ENCODE measurements at regions of chr6 and their contacts with region 1.

Region 1: GRCh38 chr6:108848116-108848868 is at the start of gene ARMC2:
- DNase-seq: peak; percentile 89
- ATAC-seq: peak; percentile 86
- H3K4me3 Mint-ChIP-seq: peak within 1 kb of the TSS; percentile 84
- H3K27ac Mint-ChIP-seq: peak within 1 kb of the TSS; percentile 83
- H3K4me1 Mint-ChIP-seq: peaks cover 31% of the 10 kb centered on the region
- H3K27me3 Mint-ChIP-seq: peaks cover 5% of the 10 kb centered on the region
- total RNA-seq, gene ARMC2: 10.3 to 10.9 TPM

Region 2: GRCh38 chr6:108835218-108835850 is 13.0 kb before region 1 on chr6:
- CTCF ChIA-PET with region 1: interaction called, 49 read pairs
- POLR2A ChIA-PET with region 1: no interaction called
- DNase-seq: peak; percentile 91
- ATAC-seq: peak; percentile 96
- H3K4me3 Mint-ChIP-seq: no peak overlapping the region
- H3K27ac Mint-ChIP-seq: no peak overlapping the region
- H3K4me1 Mint-ChIP-seq: peaks cover 45% of the 10 kb centered on the region
- H3K27me3 Mint-ChIP-seq: peaks cover 14% of the 10 kb centered on the region

Region 3: GRCh38 chr6:108862479-108863191 is 14.3 kb after region 1 on chr6:
- CTCF ChIA-PET with region 1: interaction called, 11 read pairs
- POLR2A ChIA-PET with region 1: no interaction called
- DNase-seq: no peak
- ATAC-seq: no peak
- H3K4me3 Mint-ChIP-seq: no peak overlapping the region
- H3K27ac Mint-ChIP-seq: peak overlapping the region; percentile 53
- H3K4me1 Mint-ChIP-seq: peaks cover 36% of the 10 kb centered on the region
- H3K27me3 Mint-ChIP-seq: no peaks in the 10 kb centered on the region

Measured in activated CD8-positive, alpha-beta T cell treated with anti-CD3 and anti-CD28 coated beads, Interleukin-2, amount 10 ng/mL, durations not matched to agents 7 days and 5 days (primary cell).